Body of pancreas (tissue), 4 donors: ENCODE measurements at regions of chr11 and their contacts with region 1.

Region 1: GRCh38 chr11:14454861-14455632 is 44.6 kb downstream of the COPB1 start:
- DNase-seq: no peak
- ATAC-seq: peak; percentile 18
- H3K4me3 ChIP-seq: no peak overlapping the region
- H3K27ac ChIP-seq: peak overlapping the region in 1 of 4 donors; percentile 2
- H3K4me1 ChIP-seq: no peaks in the 10 kb centered on the region
- H3K27me3 ChIP-seq: no peaks in the 10 kb centered on the region
- CTCF ChIP-seq: peak; percentile 13 to 67 (median 48)
- POLR2A ChIP-seq: no peak

Region 2: DNA sequence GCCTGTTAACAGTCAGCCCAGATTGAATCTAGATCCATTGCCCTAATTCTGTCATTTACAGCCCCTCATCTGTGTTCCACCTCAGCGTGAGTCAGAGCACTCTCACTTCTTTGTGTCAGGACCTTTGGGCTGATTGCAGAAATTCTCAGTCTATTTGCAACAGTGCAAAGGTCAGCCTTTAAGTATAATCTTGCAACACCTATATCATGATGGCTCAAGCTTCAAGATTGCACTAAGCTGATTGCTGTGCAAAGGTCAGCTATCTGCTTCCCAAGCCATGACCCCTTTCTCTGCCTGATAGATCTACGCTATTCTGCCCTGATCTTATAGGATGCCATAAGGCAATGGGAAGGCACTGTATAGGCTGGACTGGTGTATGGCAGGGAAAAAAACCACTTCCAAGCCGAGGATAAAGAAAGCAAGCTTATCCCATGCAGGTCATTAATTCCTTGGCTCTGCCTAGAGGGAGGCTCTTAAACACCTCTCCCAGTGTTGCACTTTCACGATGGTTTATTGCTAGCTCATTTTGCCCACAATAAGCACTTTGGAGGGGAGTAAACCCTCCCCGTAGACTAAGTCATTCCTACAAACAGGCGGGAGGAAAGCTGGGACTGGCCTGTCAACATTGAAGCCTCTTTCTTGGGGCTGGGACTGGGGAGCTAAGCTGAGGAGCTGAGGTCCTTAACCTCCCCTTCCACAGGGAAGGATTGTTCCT is 196.7 kb before region 1 on chr11:
- intact Hi-C with region 1: no loop called
- DNase-seq: no peak
- ATAC-seq: no peak
- H3K4me3 ChIP-seq: no peak overlapping the region
- H3K27ac ChIP-seq: no peak overlapping the region
- H3K4me1 ChIP-seq: no peaks in the 10 kb centered on the region
- H3K27me3 ChIP-seq: no peaks in the 10 kb centered on the region
- CTCF ChIP-seq: no peak
- POLR2A ChIP-seq: no peak

Region 3: GRCh38 chr11:14300661-14301304 is 154.3 kb before region 1 on chr11:
- intact Hi-C with region 1: loop called (anchors 10 kb)
- DNase-seq: peak; percentile 45 to 64 (median 60)
- ATAC-seq: peak; percentile 83
- H3K4me3 ChIP-seq: no peak overlapping the region
- H3K27ac ChIP-seq: no peak overlapping the region
- H3K4me1 ChIP-seq: peaks cover 6% of the 10 kb centered on the region
- H3K27me3 ChIP-seq: no peaks in the 10 kb centered on the region
- CTCF ChIP-seq: peak; percentile 52 to 86 (median 79)
- POLR2A ChIP-seq: no peak